ENCODE measurements at regions of chr3 and their contacts with region 1.

Region 1: GRCh38 chr3:140941434-140942220 is at the start of gene SLC25A36:
- DNase-seq: peak; percentile 93 to 97 (median 94)
- H3K4me3 ChIP-seq: peak within 1 kb of the TSS; percentile 64 to 90
- H3K4me3 Mint-ChIP-seq: peak within 1 kb of the TSS; percentile 89 to 99 (median 93)
- H3K27ac ChIP-seq: peak within 1 kb of the TSS; percentile 75
- H3K27ac Mint-ChIP-seq: peak within 1 kb of the TSS; percentile 97 to 100 (median 98)
- H3K4me1 ChIP-seq: peaks cover 28% of the 10 kb centered on the region
- H3K4me1 Mint-ChIP-seq: peaks cover 22 to 54% (median 39%) of the 10 kb centered on the region in 4 donors
- H3K27me3 ChIP-seq: no peaks in the 10 kb centered on the region
- H3K27me3 Mint-ChIP-seq: no peaks in the 10 kb centered on the region
- total RNA-seq, gene SLC25A36: 54.7 to 56.5 TPM

Region 2: DNA sequence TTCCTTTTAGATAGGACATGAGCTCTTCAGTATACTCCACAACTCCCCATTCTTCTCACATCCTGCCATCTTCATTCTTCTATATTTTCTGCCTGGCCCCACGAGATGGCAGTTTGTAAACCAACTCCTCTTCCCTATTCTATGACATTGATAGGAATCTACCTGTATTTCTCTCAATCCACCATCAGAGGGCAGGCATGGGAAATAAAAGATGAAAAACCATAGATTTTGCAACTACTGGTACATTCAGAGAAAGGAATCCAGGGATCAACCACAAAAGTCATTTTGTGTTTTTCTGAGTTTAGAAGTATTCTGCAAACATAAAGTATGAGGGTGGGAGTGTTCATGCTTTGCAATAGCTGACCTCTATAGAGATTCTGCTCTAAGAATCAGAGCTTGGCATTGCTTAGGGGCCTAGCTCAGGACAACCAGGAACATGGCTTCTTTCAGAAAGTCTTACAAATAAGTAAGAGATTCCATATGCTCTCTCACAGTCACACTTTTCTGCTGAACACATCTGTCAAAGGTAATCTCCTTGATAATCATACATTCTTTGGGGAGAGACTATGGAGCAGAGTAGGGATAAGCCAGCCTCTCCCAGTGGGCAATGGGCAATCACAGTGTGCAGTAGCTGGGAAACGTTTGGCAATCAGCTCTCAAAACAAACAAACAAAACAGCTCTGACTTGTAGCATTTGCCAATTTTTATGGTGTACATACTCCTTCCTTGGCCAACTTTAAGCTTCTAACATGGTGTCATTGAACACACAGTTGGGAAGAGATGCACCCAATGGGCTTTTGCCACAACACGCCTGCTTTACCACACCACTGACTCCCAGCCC is 43.1 kb before region 1 on chr3:
- CTCF ChIA-PET with region 1: no interaction called
- POLR2A ChIA-PET with region 1: no interaction called
- intact Hi-C with region 1: loop called (anchors 2 kb)
- DNase-seq: peak in 4 of 5 donors; percentile 28 to 43 (median 34)
- H3K4me3 ChIP-seq: no peak overlapping the region
- H3K4me3 Mint-ChIP-seq: no peak overlapping the region
- H3K27ac ChIP-seq: no peak overlapping the region
- H3K27ac Mint-ChIP-seq: no peak overlapping the region
- H3K4me1 ChIP-seq: no peaks in the 10 kb centered on the region
- H3K4me1 Mint-ChIP-seq: peaks cover 0 to 2% (median 0%) of the 10 kb centered on the region in 4 donors
- H3K27me3 ChIP-seq: no peaks in the 10 kb centered on the region
- H3K27me3 Mint-ChIP-seq: peaks cover 18 to 21% of the 10 kb centered on the region in 2 donors